ENCODE measurements at regions of chr12 and their contacts with region 1.

Region 1: GRCh38 chr12:103948746-103949406 is 16.8 kb upstream of the TDG start:
- DNase-seq: no peak
- H3K4me3 ChIP-seq: no peak overlapping the region
- H3K27ac ChIP-seq: no peak overlapping the region
- H3K4me1 ChIP-seq: peaks cover 0 to 2% (median 0%) of the 10 kb centered on the region in 4 experiments
- H3K27me3 ChIP-seq: no peaks in the 10 kb centered on the region

Region 2: GRCh38 chr12:103936679-103937078 is 12.2 kb before region 1 on chr12:
- CTCF ChIA-PET with region 1: interaction called, 9 read pairs
- POLR2A ChIA-PET with region 1: interaction called, 13 read pairs
- DNase-seq: peak in 1 of 3 donors; percentile 40
- H3K4me3 ChIP-seq: no peak overlapping the region
- H3K27ac ChIP-seq: no peak overlapping the region
- H3K4me1 ChIP-seq: peaks cover 4 to 19% (median 14%) of the 10 kb centered on the region in 4 experiments
- H3K27me3 ChIP-seq: no peaks in the 10 kb centered on the region

Region 3: GRCh38 chr12:103965590-103966504 is 17.0 kb after region 1 on chr12 and contains the start of gene TDG:
- CTCF ChIA-PET with region 1: interaction called, 9 read pairs
- POLR2A ChIA-PET with region 1: interaction called, 12 read pairs
- DNase-seq: peak; percentile 99 to 100 (median 99)
- H3K4me3 ChIP-seq: peak within 1 kb of the TSS; percentile 67 to 98 (median 84)
- H3K27ac ChIP-seq: peak within 1 kb of the TSS; percentile 88 to 95
- H3K4me1 ChIP-seq: peaks cover 7 to 26% (median 19%) of the 10 kb centered on the region in 4 experiments
- H3K27me3 ChIP-seq: no peaks in the 10 kb centered on the region